Body of pancreas (tissue), 4 donors: ENCODE measurements at regions of chr10 and their contacts with region 1.

Region 1: GRCh38 chr10:110883924-110884323 is 12.2 kb downstream of the PDCD4 start:
- DNase-seq: no peak
- ATAC-seq: no peak
- H3K4me3 ChIP-seq: no peak overlapping the region
- H3K27ac ChIP-seq: peak overlapping the region; percentile 1 to 99 (median 45)
- H3K4me1 ChIP-seq: peaks cover 65% of the 10 kb centered on the region
- H3K27me3 ChIP-seq: no peaks in the 10 kb centered on the region
- CTCF ChIP-seq: no peak
- POLR2A ChIP-seq: no peak

Region 2: DNA sequence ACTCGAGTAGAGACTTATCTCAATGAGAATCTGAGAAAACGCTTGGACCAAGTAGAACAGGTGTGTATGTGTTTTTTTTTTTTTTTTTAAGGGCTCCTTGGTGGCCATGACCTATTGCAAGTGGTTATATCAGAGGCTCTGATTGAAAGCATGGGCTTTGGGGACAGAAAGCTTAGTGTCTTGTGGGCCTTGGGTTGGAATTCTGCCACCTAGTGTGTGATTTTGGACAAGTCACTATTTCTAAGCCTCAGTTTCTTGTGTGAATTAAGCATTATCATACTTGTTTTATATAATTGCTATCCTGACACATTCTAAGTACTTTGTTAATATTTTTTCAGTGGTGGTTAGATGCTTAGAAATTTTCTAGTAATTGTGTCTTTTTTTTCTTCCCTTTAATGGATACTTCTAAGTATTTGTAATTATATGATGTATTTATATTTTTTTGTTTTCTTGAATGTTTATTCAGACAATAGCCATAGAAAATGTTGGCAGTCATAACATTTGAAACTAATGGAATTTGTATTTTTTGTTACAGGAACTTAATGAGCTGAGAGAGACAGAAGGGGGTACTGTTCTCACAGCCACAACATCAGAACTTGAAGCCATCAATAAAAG is 283.3 kb before region 1 on chr10:
- intact Hi-C with region 1: no loop called
- DNase-seq: peak in 3 of 4 donors; percentile 23 to 45 (median 24)
- ATAC-seq: no peak
- H3K4me3 ChIP-seq: no peak overlapping the region
- H3K27ac ChIP-seq: no peak overlapping the region
- H3K4me1 ChIP-seq: no peaks in the 10 kb centered on the region
- H3K27me3 ChIP-seq: no peaks in the 10 kb centered on the region
- CTCF ChIP-seq: peak in 5 of 7 experiments; percentile 37 to 43 (median 40)
- POLR2A ChIP-seq: no peak

Region 3: DNA sequence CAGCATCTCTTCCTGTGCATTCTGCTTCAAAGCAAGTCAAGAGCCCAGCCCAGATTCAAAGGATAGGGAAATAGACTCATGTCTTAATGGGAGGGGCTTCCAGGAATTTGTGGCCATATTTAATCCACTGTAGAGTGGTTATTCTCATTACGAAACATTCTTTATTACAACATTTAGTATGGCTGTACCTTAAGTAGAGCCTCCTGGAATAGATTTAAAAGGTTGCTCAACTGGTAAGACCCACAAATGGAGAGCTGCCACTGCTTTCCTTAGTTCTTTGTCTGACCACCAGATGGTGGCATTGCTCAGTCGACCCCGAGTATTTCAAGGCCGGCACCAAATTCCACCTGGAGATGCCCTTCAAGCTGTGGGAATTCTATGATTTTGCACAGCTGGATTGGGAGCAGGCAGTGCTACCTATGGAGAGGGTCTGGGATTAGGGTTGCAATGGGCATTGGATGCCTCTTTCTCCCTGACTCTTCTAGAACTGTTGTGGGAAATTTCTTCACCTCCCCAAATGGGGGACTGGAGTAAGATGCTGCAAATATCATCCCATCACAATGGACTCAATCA is 137.6 kb before region 1 on chr10:
- intact Hi-C with region 1: loop called (anchors 10 kb)
- DNase-seq: peak; percentile 82 to 88 (median 84)
- ATAC-seq: peak; percentile 95
- H3K4me3 ChIP-seq: no peak overlapping the region
- H3K27ac ChIP-seq: no peak overlapping the region
- H3K4me1 ChIP-seq: peaks cover 8% of the 10 kb centered on the region
- H3K27me3 ChIP-seq: no peaks in the 10 kb centered on the region
- CTCF ChIP-seq: peak; percentile 42 to 95 (median 92)
- POLR2A ChIP-seq: no peak